Right lobe of liver (tissue), 6 donors: ENCODE measurements at regions of chr2 and their contacts with region 1.

Region 1: DNA sequence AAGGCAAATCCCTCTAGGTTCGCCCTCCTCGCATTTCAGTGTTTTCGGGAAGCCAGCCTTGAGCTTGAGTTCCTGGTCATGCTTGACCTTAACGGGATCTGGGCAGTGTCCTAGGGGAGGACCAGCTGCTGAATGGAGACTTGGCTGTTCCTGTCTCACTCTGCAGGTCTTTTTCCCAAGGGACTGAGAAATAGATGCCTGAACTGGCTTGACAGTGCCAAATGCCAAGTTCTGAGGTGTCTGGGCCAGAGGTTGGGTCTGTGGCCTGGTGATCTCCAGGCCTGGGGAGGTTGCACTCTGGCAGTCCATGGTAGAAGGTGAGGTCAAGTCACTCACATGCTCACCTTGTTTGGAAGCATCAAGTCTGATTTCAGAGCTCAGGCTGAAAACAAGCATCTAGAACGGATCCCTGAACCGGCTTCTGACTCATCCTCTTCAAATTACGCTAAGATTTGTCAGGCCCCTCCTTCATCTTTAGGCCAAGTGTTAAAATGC is 19.6 kb downstream of the RHOB start:
- DNase-seq: no peak
- ATAC-seq: peak in 2 of 4 donors; percentile 19 to 24
- H3K4me3 ChIP-seq: no peak overlapping the region
- H3K27ac ChIP-seq: no peak overlapping the region
- H3K4me1 ChIP-seq: peaks cover 0 to 12% (median 4%) of the 10 kb centered on the region in 4 donors
- H3K27me3 ChIP-seq: no peaks in the 10 kb centered on the region
- CTCF ChIP-seq: no peak
- POLR2A ChIP-seq: no peak

Region 2: DNA sequence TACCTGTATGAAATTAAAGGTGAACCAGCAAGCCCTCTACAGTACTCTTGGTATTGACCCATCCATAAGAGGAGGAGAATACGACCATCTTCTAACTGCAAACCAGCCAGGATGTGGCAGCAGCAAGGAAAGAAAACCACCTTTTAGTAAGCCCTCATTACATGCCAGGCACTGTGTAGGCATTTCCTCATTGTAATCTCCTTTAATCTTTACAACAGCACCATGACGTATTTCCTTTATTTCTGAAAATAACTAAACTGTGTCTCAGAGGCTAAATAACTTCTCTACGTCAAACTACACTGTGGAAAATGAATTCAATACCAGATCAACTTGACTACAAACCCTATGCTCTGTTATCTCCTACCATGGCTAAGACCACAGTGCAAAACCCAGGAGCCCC is 494.8 kb before region 1 on chr2:
- intact Hi-C with region 1: no loop called
- DNase-seq: no peak
- ATAC-seq: no peak
- H3K4me3 ChIP-seq: no peak overlapping the region
- H3K27ac ChIP-seq: no peak overlapping the region
- H3K4me1 ChIP-seq: no peaks in the 10 kb centered on the region
- H3K27me3 ChIP-seq: no peaks in the 10 kb centered on the region
- CTCF ChIP-seq: no peak
- POLR2A ChIP-seq: no peak

Region 3: GRCh38 chr2:20516646-20517341 is 50.3 kb after region 1 on chr2:
- intact Hi-C with region 1: loop called in 1 of 2 experiments (anchors 10 kb)
- DNase-seq: no peak
- ATAC-seq: no peak
- H3K4me3 ChIP-seq: no peak overlapping the region
- H3K27ac ChIP-seq: no peak overlapping the region
- H3K4me1 ChIP-seq: no peaks in the 10 kb centered on the region
- H3K27me3 ChIP-seq: no peaks in the 10 kb centered on the region
- CTCF ChIP-seq: no peak
- POLR2A ChIP-seq: no peak

Region 4: DNA sequence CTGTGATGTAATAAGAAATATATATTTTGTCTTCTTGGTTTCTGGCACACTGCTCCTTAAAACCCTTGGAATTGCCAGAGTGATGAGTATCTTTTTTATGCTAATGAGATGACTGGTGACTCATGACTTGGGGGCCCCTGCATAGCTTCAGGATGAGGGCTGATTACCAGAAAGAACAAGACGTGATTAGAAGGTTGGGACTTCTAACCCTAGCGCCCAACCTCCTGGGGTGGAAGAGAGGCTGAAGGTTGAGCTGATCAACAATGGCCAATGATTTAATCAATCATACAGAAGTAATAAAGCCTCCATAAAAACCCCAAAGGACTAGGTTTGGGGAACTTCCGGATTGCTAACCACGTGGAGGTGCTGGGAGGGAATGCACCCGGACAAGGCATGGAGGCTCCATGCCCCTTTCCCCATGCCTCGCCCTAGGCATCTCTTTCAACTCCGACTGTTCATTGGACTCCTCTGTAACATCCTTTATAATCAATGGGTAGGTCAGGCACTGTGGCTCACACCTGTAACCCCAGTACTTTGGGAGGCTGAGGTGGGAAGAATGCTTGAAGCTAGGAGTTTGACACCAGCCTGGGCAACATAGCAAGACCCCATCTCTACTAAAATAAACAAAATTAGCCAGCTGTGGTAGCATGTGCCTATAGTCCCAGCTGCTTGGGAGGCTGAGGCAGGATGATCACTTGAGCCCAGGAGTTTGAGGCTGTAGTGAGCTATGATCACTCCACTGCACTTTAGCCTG is 95.4 kb after region 1 on chr2:
- intact Hi-C with region 1: no loop called
- DNase-seq: no peak
- ATAC-seq: no peak
- H3K4me3 ChIP-seq: no peak overlapping the region
- H3K27ac ChIP-seq: no peak overlapping the region
- H3K4me1 ChIP-seq: no peaks in the 10 kb centered on the region
- H3K27me3 ChIP-seq: no peaks in the 10 kb centered on the region
- CTCF ChIP-seq: no peak
- POLR2A ChIP-seq: no peak